PC-3 (cell line): ENCODE measurements at regions of chr5 and their contacts with region 1.

Region 1: DNA sequence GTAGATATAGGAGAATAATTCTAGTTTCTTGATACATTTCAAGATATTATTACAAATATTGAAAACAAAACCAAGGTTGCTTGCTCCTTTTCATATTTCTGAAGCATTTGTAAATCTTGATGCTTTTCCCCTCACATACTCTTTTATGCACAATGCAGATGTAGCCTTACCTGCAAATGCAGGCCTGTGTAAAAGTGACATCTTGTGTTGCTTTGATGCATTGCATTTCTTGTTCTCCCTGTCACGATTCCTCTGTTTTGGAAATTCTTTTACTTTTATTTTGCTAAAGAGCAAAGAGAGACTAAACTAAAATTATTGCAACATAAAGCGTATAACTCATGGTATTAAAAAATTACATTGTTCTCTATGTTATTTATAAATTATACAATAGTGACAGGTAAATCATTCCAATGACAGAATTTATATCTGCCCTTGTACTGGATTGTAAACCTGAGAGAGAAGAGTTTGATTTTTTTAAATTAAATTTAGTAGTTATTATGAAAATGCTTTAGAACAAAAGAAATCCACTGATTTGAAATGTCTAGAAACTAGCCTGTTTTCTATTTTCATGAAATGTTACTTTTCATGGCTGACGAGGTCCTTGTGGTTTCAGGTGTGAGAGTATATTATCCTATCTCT is 970.0 kb downstream of the MAT2B start:
- DNase-seq: peak; percentile 31
- ATAC-seq: peak; percentile 67; the same call in 1 of the 2 replicates
- H3K4me3 ChIP-seq: no peak overlapping the region
- H3K27ac ChIP-seq: no peak overlapping the region
- H3K4me1 ChIP-seq: no peaks in the 10 kb centered on the region
- H3K27me3 ChIP-seq: no peaks in the 10 kb centered on the region
- CTCF ChIP-seq: peak; percentile 69

Region 2: GRCh38 chr5:163695830-163696578 is 779.5 kb before region 1 on chr5:
- CTCF ChIA-PET with region 1: no interaction called
- POLR2A ChIA-PET with region 1: no interaction called
- intact Hi-C with region 1: loop called (anchors 10 kb)
- DNase-seq: peak; percentile 64
- ATAC-seq: peak; percentile 95
- H3K4me3 ChIP-seq: no peak overlapping the region
- H3K27ac ChIP-seq: no peak overlapping the region
- H3K4me1 ChIP-seq: no peaks in the 10 kb centered on the region
- H3K27me3 ChIP-seq: 0 out of 2 replicates have a peak, but pooled peaks cover 7% of the 10 kb centered on the region
- CTCF ChIP-seq: peak; percentile 74

Region 3: DNA sequence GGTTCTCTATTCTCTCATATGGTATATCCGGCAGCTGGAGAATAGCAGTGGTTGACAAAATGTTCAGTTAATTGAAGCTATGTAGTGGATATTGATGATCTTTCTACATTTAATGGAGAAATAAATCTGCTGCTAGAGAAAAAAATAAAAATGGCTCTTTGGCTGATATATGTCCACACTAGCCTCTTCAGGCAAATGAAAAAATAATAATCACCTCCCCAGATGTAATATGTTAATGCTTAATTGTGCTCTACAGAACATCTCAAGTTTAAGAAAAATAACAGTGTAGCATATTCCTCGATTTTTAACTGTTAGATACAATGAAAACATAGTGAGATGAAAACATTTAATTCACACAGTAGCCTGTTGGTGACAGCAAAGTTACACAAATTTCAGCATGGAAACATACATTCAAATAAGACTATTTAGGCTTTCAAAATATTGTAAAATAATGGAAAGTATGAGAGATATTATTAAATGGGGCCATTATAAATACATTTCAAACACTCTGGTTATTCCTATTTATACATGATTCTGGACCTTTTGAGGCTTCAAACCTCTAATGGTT is 427.0 kb before region 1 on chr5:
- CTCF ChIA-PET with region 1: no interaction called
- POLR2A ChIA-PET with region 1: no interaction called
- intact Hi-C with region 1: loop called (anchors 1 kb)
- DNase-seq: peak; percentile 23
- ATAC-seq: no peak
- H3K4me3 ChIP-seq: no peak overlapping the region
- H3K27ac ChIP-seq: no peak overlapping the region
- H3K4me1 ChIP-seq: no peaks in the 10 kb centered on the region
- H3K27me3 ChIP-seq: no peaks in the 10 kb centered on the region
- CTCF ChIP-seq: peak; percentile 45; the same call in 1 of the 2 replicates

Region 4: GRCh38 chr5:164498438-164498837 is 23.0 kb after region 1 on chr5:
- CTCF ChIA-PET with region 1: no interaction called
- POLR2A ChIA-PET with region 1: no interaction called
- intact Hi-C with region 1: no loop called
- DNase-seq: no peak
- ATAC-seq: no peak
- H3K4me3 ChIP-seq: no peak overlapping the region
- H3K27ac ChIP-seq: no peak overlapping the region
- H3K4me1 ChIP-seq: no peaks in the 10 kb centered on the region
- H3K27me3 ChIP-seq: no peaks in the 10 kb centered on the region
- CTCF ChIP-seq: no peak